ENCODE measurements at regions of chr5 and their contacts with region 1.

Region 1: DNA sequence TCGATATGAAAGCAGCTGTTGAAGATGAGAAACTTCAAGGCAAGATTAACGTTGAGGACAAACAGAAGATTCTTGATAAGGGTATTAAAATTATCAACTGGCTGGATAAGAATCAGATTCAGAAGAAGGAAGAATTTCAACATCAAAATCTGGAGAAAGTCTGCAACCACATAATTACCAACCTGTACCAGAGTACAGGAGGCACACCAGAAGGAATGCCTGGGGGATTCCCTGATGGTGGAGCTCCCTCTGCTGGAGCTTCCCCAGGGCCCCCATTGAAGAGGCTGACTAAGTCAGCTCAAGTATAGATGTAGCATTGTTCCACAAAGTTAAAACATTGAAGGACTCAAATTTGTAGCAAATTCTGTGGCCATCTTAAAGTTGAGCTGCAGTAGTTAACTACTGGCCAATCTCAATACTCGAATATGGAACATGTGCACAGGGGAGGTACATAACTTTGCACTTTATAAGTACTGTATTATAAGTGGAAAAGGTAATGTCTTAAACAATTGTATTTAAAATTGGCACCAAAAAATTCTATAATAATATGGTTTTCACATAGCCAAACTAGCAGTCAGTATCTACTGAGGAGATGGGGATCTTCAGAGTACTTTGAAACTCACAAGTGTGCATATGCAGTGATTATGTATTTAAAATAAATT is 237.5 kb downstream of the CHSY3 start:
- H3K4me3 ChIP-seq: no peak overlapping the region
- H3K27ac ChIP-seq: no peak overlapping the region
- H3K4me1 ChIP-seq: peaks cover 3% of the 10 kb centered on the region; the same call in 1 of the 2 replicates
- CTCF ChIP-seq: peak; percentile 41; the same call in 1 of the 2 replicates

Region 2: DNA sequence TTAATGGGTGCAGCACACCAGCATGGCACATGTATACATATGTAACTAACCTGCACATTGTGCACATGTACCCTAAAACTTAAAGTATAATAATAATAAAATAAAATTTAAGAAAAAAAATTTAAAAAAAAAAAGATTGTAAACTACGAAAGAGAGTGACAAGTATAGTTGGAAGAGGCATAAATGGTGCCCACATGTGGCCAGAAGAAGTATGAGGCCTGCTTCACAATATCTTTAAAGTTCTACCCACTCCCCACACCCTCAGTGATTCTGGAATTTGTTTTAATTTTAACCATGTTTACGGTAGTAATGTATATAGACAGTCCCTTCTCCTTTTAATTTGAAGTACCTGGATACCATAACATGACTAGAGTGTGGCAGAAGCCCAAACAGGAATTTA is 64.8 kb before region 1 on chr5:
- CTCF ChIA-PET with region 1: no interaction called
- POLR2A ChIA-PET with region 1: no interaction called
- H3K4me3 ChIP-seq: no peak overlapping the region
- H3K27ac ChIP-seq: no peak overlapping the region
- H3K4me1 ChIP-seq: no peaks in the 10 kb centered on the region
- CTCF ChIP-seq: no peak

Region 3: GRCh38 chr5:130109152-130109551 is 32.6 kb before region 1 on chr5:
- CTCF ChIA-PET with region 1: interaction called, 21 read pairs
- POLR2A ChIA-PET with region 1: no interaction called
- H3K4me3 ChIP-seq: no peak overlapping the region
- H3K27ac ChIP-seq: no peak overlapping the region
- H3K4me1 ChIP-seq: no peaks in the 10 kb centered on the region
- CTCF ChIP-seq: no peak

Region 4: GRCh38 chr5:130126746-130127145 is 15.0 kb before region 1 on chr5:
- CTCF ChIA-PET with region 1: interaction called, 10 read pairs
- POLR2A ChIA-PET with region 1: no interaction called
- H3K4me3 ChIP-seq: no peak overlapping the region
- H3K27ac ChIP-seq: no peak overlapping the region
- H3K4me1 ChIP-seq: no peaks in the 10 kb centered on the region
- CTCF ChIP-seq: no peak